ENCODE measurements at regions of chr17 and their contacts with region 1.

Region 1: GRCh38 chr17:42221937-42222745 is 27.8 kb upstream of the GHDC start:
- DNase-seq: no peak
- H3K4me3 ChIP-seq: no peak overlapping the region
- H3K27me3 ChIP-seq: no peaks in the 10 kb centered on the region
- CTCF ChIP-seq: peak; percentile 77

Region 2: GRCh38 chr17:42270596-42270995 is 48.5 kb after region 1 on chr17:
- CTCF ChIA-PET with region 1: interaction called, 11 read pairs
- POLR2A ChIA-PET with region 1: no interaction called
- DNase-seq: no peak
- H3K4me3 ChIP-seq: no peak overlapping the region
- H3K27me3 ChIP-seq: no peaks in the 10 kb centered on the region
- CTCF ChIP-seq: no peak

Region 3: DNA sequence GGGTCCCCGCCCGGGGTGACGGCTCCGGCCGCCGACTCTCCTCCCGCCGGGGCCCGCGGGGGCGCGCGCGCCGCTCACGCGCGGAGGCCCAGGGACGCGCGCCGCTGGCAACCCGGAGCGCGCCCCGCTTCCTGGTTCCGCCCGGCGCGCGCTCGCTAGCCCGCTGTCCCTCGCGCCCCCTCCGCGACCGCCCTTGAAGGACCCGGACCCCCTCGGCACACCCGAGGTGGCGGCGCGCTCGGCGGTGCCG is 54.1 kb after region 1 on chr17 and contains the start of gene STAT5B:
- CTCF ChIA-PET with region 1: interaction called, 10 read pairs
- POLR2A ChIA-PET with region 1: no interaction called
- DNase-seq: no peak
- H3K4me3 ChIP-seq: peak within 1 kb of the TSS; percentile 85
- H3K27me3 ChIP-seq: no peaks in the 10 kb centered on the region
- CTCF ChIP-seq: no peak
- polyA plus RNA-seq, gene STAT5B: 29.8 and 37.2 TPM in 2 replicates

Region 4: GRCh38 chr17:42405963-42406495 is 183.9 kb after region 1 on chr17:
- CTCF ChIA-PET with region 1: no interaction called
- POLR2A ChIA-PET with region 1: interaction called, 11 read pairs
- DNase-seq: no peak
- H3K4me3 ChIP-seq: no peak overlapping the region
- H3K27me3 ChIP-seq: no peaks in the 10 kb centered on the region
- CTCF ChIP-seq: peak; percentile 79

Region 5: DNA sequence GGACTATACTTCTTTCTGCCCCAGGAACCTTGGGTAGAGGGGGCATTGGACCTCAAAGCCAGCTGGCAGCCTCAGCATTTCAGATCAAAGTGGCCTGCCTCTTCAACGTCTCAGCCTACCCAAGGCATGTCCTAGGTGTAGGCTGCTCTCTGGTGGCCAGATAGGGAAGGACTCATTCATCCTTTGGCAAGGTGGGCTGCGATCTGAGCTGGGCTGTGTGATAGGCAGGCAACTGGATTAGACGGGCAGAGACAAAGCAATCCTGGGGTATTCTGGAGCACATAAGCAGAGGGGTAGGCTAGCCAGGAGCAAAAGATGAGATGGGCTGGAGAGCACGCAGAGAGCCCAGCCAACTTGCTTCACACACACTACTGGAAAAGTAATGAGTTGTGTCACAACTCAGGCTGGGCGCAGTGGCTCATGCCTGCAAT is 305.1 kb after region 1 on chr17:
- CTCF ChIA-PET with region 1: interaction called, 13 read pairs
- POLR2A ChIA-PET with region 1: no interaction called
- DNase-seq: no peak
- H3K4me3 ChIP-seq: no peak overlapping the region
- H3K27me3 ChIP-seq: no peaks in the 10 kb centered on the region
- CTCF ChIP-seq: peak; percentile 88